Activated naive CD8-positive, alpha-beta T cell treated with anti-CD3 and anti-CD28 coated beads, Interleukin-2, amount 10 ng/mL, durations not matched to agents 7 days and 5 days (primary cell): ENCODE measurements at regions of chr3 and their contacts with region 1.

Region 1: DNA sequence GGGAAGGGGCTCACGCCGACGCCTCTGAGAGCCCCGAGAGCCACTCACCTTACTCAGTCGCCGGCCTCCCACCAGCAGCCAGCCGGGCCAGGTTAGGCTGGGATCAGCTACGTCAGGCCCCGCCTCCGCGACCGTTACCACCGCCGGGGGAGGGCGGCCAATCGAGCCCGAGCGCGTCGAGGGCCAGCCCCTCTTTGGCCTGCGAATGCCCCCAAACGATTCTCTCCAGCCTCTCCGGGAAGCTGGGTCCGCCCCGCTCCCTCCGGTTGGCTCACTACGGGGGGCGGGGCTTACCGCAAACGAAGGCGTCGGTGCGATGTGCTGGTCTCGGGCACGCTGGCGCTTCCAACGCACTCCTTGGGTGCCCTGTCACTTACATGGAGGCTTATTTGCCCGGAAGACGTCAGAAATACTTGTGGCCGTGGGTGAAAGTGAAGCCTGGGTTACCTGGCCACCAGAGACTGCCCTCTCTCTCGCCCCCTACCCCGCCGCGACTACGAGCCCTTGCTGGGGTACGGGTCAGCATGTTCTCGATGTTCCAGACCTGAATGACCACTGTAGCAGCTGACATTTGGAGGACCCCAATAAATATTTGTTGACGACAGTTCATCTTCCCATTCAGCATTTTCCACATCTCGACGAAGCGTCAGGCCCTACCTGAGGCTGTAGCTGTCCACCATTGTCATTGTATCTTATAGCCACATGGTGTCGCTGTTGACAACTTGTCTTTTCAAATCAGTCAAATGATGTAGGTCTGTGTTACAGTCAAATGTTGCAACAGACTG is at the start of gene CEP70:
- DNase-seq: peak; percentile 91
- ATAC-seq: peak; percentile 92
- H3K4me3 Mint-ChIP-seq: peak within 1 kb of the TSS; percentile 79
- H3K27ac Mint-ChIP-seq: peak within 1 kb of the TSS; percentile 87
- H3K4me1 Mint-ChIP-seq: peaks cover 20% of the 10 kb centered on the region
- H3K27me3 Mint-ChIP-seq: no peaks in the 10 kb centered on the region
- total RNA-seq, gene CEP70: 24.9 to 28.3 TPM

Region 2: DNA sequence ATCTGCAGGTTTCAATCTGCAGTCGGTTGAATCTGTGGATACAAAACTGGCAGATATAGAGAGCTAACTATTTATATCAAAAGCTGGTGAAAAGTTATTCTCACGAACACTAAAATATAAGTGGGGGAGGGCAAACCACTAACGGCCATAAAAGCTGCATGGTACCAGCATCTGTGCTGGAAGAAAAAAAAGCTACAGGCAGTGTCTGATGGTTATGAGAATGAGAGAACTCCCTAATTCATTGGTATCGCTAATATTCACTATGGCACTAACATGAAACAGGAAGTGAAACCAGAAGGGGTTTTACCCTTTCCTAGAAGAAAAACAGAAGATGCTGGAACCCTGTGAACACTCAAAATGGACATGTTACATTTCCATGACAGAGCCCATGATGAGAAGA is 16.2 kb before region 1 on chr3:
- POLR2A ChIA-PET with region 1: interaction called, 13 read pairs
- DNase-seq: no peak
- ATAC-seq: peak; percentile 58
- H3K4me3 Mint-ChIP-seq: peak overlapping the region; percentile 78
- H3K27ac Mint-ChIP-seq: peak overlapping the region; percentile 94
- H3K4me1 Mint-ChIP-seq: peaks cover 26% of the 10 kb centered on the region
- H3K27me3 Mint-ChIP-seq: no peaks in the 10 kb centered on the region

Region 3: DNA sequence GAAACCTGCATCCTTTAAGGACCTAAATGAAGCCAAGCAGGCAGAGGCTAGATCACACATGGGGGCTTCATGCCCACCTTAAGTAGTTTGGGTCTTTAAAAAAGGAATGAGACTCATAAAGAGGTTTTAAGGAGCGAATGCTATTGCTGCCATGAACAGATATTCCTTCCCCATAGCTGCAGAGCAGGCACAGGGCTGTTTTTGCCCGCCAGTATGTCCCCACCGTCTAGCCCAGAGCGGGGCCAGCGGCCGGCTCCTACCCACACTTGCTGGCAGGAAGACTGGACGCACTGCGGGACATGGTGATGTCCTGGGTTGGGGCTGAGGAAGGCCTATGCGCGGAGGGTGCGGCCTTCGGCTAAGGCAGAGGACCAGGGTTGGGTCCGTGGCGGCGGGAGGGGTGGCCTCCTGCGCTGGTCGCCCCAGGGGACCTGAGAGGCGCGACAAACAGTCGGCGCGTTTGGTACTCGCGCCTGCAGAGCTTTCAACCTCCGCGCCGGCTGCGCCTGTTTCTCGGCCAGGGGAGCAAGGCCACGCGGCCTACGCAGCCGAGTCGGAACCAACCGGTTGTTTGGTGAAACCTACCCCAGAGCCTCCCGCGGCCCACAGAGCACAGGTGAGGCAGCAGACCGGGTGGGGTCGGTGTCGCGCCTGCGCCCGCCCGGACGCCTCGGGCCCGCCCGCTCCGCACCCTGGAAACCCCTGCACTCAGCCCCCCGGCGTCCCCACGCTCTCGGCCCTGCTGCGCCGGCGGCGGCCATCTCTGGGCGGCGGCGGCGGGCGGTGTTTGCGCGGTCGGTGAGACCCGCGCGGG is 14.2 kb after region 1 on chr3 and contains the start of gene FAIM:
- POLR2A ChIA-PET with region 1: interaction called, 25 read pairs
- DNase-seq: peak; percentile 84
- ATAC-seq: peak; percentile 80
- H3K4me3 Mint-ChIP-seq: peak within 1 kb of the TSS; percentile 91
- H3K27ac Mint-ChIP-seq: peak within 1 kb of the TSS; percentile 99
- H3K4me1 Mint-ChIP-seq: peaks cover 15% of the 10 kb centered on the region
- H3K27me3 Mint-ChIP-seq: peaks cover 2% of the 10 kb centered on the region
- total RNA-seq, gene FAIM: 2.7 to 5.2 TPM

Region 4: GRCh38 chr3:138625707-138626365 is 31.5 kb after region 1 on chr3:
- POLR2A ChIA-PET with region 1: no interaction called
- DNase-seq: no peak
- ATAC-seq: no peak
- H3K4me3 Mint-ChIP-seq: no peak overlapping the region
- H3K27ac Mint-ChIP-seq: no peak overlapping the region
- H3K4me1 Mint-ChIP-seq: no peaks in the 10 kb centered on the region
- H3K27me3 Mint-ChIP-seq: no peaks in the 10 kb centered on the region

Region 5: GRCh38 chr3:138915503-138916498 is 321.5 kb after region 1 on chr3:
- POLR2A ChIA-PET with region 1: interaction called, 16 read pairs
- DNase-seq: peak; percentile 91
- ATAC-seq: peak; percentile 86
- H3K4me3 Mint-ChIP-seq: peak overlapping the region; percentile 84
- H3K27ac Mint-ChIP-seq: peak overlapping the region; percentile 80
- H3K4me1 Mint-ChIP-seq: peaks cover 4% of the 10 kb centered on the region
- H3K27me3 Mint-ChIP-seq: peaks cover 39% of the 10 kb centered on the region